GM13976 (cell line): ENCODE measurements at regions of chr12 and their contacts with region 1.

Region 1: DNA sequence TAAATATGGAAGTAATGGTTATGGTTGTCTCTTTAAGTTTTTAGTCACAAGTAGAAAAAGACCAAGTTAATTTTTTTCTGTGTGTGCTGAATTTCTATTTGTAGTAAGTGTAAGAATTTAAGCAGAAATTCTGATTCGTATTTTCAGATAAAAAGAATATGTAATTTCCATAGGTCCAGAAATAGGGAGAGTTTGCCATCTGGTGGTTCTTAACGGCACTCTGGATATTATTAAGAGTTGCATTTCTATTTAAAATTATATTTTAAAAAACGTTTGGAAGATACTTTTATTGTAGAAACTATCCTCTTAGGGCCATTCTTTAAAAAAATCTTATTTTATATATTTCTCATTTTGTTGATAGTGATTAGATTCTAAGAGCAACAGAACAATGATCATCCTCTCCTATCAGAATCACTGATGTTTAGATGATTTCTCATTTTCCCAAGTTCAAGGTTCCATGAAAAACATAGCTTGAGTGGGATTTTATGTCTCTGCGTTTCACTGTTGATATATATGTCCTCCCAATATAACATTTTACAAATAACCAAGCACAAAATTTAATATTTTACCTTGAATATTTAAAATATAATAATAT is 88.3 kb downstream of the LRRK2 start:
- DNase-seq: no peak
- CTCF ChIP-seq: no peak

Region 2: GRCh38 chr12:40010899-40011774 is 301.9 kb before region 1 on chr12:
- in situ Hi-C with region 1: loop called (anchors 10 kb)
- DNase-seq: peak; percentile 50
- CTCF ChIP-seq: peak; percentile 56

Region 3: GRCh38 chr12:40152783-40153383 is 160.2 kb before region 1 on chr12:
- in situ Hi-C with region 1: loop called (anchors 5 kb)
- DNase-seq: no peak
- CTCF ChIP-seq: peak; percentile 80